ENCODE measurements at regions of chr9 and their contacts with region 1.

Region 1: GRCh38 chr9:116860509-116861120 is 173.5 kb downstream of the TRIM32 start:
- DNase-seq: peak; percentile 64 to 75 (median 65)
- H3K4me3 ChIP-seq: no peak overlapping the region
- H3K27ac ChIP-seq: no peak overlapping the region
- H3K4me1 ChIP-seq: no peaks in the 10 kb centered on the region
- H3K27me3 ChIP-seq: no peaks in the 10 kb centered on the region
- CTCF ChIP-seq: peak; percentile 71

Region 2: GRCh38 chr9:116737152-116737546 is 123.5 kb before region 1 on chr9:
- intact Hi-C with region 1: loop called (anchors 10 kb)
- DNase-seq: peak; percentile 89 to 94 (median 90)
- H3K4me3 ChIP-seq: no peak overlapping the region
- H3K27ac ChIP-seq: no peak overlapping the region
- H3K4me1 ChIP-seq: no peaks in the 10 kb centered on the region
- H3K27me3 ChIP-seq: no peaks in the 10 kb centered on the region
- CTCF ChIP-seq: peak; percentile 84